Calu3 (cell line): ENCODE measurements at regions of chr16 and their contacts with region 1.

Region 1: GRCh38 chr16:86575754-86576557 is 2.4 kb upstream of the FOXL1 start:
- DNase-seq: peak; percentile 97
- H3K4me3 Mint-ChIP-seq: peak overlapping the region; percentile 76
- H3K27ac Mint-ChIP-seq: peak overlapping the region; percentile 88
- H3K4me1 Mint-ChIP-seq: peaks cover 56% of the 10 kb centered on the region
- H3K27me3 Mint-ChIP-seq: no peaks in the 10 kb centered on the region
- CTCF ChIP-seq: peak; percentile 84

Region 2: DNA sequence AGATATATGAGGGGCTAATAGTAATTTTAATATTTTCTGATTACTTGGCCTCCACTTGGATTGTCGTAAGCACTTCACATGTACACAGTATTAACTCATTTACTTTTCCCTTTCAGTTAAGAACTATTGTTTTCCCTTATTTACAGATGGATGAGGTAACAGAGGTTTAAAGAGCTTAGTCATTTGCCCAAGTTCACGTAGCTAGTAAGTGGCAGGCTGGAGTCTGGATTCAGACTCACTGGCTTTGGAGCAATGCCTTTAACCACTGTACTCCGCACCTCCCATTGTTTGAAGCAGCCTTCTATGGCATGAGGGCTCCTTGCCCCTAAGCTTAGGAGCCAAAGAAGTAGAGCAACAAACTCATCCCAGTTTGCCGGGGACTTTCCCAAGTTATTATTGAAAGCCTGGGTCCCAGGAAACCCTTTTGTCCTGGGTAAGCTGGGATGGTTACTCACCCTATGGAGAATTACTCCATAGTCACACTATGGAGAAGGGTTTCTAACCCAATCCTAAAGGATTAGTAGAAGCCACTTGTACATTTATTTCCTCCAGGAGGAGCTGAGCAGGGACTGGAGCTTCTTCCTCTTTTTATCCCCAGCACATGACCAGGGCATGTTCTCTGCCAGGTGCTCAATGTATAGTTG is 14.7 kb after region 1 on chr16:
- CTCF ChIA-PET with region 1: interaction called, 11 read pairs
- intact Hi-C with region 1: no loop called
- DNase-seq: peak; percentile 39
- H3K4me3 Mint-ChIP-seq: no peak overlapping the region
- H3K27ac Mint-ChIP-seq: peak overlapping the region; percentile 12
- H3K4me1 Mint-ChIP-seq: peaks cover 13% of the 10 kb centered on the region
- H3K27me3 Mint-ChIP-seq: peaks cover 9% of the 10 kb centered on the region
- CTCF ChIP-seq: no peak

Region 3: GRCh38 chr16:86664533-86665318 is 88.8 kb after region 1 on chr16:
- CTCF ChIA-PET with region 1: interaction called, 23 read pairs
- intact Hi-C with region 1: loop called (anchors 2 kb)
- DNase-seq: peak; percentile 87
- H3K4me3 Mint-ChIP-seq: peak overlapping the region; percentile 49
- H3K27ac Mint-ChIP-seq: peak overlapping the region; percentile 99
- H3K4me1 Mint-ChIP-seq: peaks cover 45% of the 10 kb centered on the region
- H3K27me3 Mint-ChIP-seq: no peaks in the 10 kb centered on the region
- CTCF ChIP-seq: no peak

Region 4: GRCh38 chr16:86761111-86762031 is 185.4 kb after region 1 on chr16:
- CTCF ChIA-PET with region 1: interaction called, 22 read pairs
- intact Hi-C with region 1: loop called (anchors 2 kb)
- DNase-seq: peak; percentile 84
- H3K4me3 Mint-ChIP-seq: peak overlapping the region; percentile 39
- H3K27ac Mint-ChIP-seq: no peak overlapping the region
- H3K4me1 Mint-ChIP-seq: peaks cover 37% of the 10 kb centered on the region
- H3K27me3 Mint-ChIP-seq: no peaks in the 10 kb centered on the region
- CTCF ChIP-seq: peak; percentile 95

Region 5: GRCh38 chr16:86874141-86874540 is 298.2 kb after region 1 on chr16:
- CTCF ChIA-PET with region 1: interaction called, 9 read pairs
- intact Hi-C with region 1: loop called (anchors 5 kb)
- DNase-seq: peak; percentile 67
- H3K4me3 Mint-ChIP-seq: no peak overlapping the region
- H3K27ac Mint-ChIP-seq: no peak overlapping the region
- H3K4me1 Mint-ChIP-seq: peaks cover 12% of the 10 kb centered on the region
- H3K27me3 Mint-ChIP-seq: peaks cover 75% of the 10 kb centered on the region
- CTCF ChIP-seq: peak; percentile 72